ENCODE measurements at regions of chr7 and their contacts with region 1.

Region 1: GRCh38 chr7:133344275-133344674 is 91.4 kb downstream of the EXOC4 start:
- DNase-seq: no peak
- H3K4me3 ChIP-seq: no peak overlapping the region
- H3K27ac ChIP-seq: no peak overlapping the region
- H3K4me1 ChIP-seq: no peaks in the 10 kb centered on the region
- H3K27me3 ChIP-seq: no peaks in the 10 kb centered on the region
- CTCF ChIP-seq: peak; percentile 73

Region 2: DNA sequence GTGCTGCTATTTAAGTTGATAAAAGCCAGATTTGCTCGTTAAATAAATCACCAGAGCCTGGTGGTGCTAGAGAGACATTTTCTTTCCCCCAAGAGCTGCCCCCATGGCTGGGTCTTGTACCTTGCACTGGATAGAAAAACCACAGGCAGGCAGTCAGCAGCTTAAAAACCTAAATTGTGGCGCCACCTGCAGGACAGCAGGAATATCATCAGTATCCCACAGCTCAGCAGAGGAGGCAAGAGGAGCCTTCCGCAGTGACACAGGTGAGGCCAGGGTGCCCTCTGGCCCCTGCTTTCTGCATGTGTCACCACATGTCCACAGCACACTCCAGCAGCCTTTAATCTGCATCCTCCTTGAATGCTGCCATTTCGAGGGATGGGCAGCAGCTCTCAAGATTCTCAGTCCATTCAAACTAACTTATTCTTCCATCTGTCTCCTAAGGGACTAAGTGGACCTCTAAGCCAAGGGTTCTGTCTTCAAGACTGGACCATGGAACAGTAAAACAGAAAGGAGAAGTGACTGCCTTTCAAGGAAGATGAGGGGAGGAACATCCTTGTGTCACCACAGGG is 763.5 kb before region 1 on chr7:
- CTCF ChIA-PET with region 1: no interaction called
- POLR2A ChIA-PET with region 1: no interaction called
- intact Hi-C with region 1: loop called (anchors 5 kb)
- DNase-seq: peak; percentile 47 to 52
- H3K4me3 ChIP-seq: no peak overlapping the region
- H3K27ac ChIP-seq: no peak overlapping the region
- H3K4me1 ChIP-seq: no peaks in the 10 kb centered on the region
- H3K27me3 ChIP-seq: peaks cover 44% of the 10 kb centered on the region; the same call in 1 of the 2 replicates
- CTCF ChIP-seq: peak; percentile 86

Measured in PC-9 (cell line).